CD8-positive, alpha-beta T cell (primary cell): ENCODE measurements at regions of chr4 and their contacts with region 1.

Region 1: DNA sequence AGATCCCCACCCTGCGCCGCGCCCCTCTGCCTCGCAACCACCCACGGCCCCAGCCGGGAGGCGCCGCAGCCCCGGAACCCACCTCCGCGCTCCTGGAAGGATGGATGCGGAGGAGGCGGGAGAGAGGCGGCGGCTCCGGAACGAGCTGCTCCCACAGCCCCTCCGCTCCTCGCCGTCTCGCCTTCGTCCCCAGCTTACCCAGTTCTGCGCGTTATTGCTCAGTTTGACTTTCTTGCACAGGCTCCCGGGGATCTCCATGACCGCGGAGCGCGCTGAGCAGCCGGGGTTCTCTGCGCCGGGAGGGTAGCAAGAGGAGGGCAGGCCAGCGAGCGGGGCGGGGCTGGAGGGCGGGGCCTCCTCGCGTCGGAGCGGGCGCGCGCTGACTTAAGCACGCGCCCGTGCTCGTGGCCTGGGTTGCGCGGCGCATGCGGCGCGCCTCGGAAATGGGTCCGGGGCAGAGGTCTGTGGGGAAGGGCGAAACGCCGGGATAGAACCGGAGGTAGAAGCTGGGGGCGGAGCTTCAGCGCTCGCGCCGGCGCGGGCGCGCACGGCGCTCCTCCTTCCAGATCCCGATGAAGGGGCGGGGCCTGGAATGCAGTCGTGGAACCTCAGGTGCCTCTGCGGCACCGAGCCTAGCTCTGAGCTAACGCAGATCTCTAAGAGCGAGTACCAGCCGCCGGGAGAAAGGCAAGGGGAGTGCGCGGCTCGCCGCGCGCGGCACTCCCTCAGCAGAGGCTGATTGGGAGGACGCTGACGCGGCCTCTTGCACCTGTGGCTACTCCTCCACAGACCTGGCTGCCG is at the start of gene PAPSS1:
- DNase-seq: peak; percentile 87 to 99 (median 96)
- ATAC-seq: peak; percentile 85
- H3K4me3 ChIP-seq: peak within 1 kb of the TSS; percentile 65 to 92
- H3K4me3 Mint-ChIP-seq: peak within 1 kb of the TSS; percentile 91
- H3K27ac ChIP-seq: peak within 1 kb of the TSS; percentile 64 to 82
- H3K27ac Mint-ChIP-seq: peak within 1 kb of the TSS; percentile 93
- H3K4me1 ChIP-seq: peaks cover 13% of the 10 kb centered on the region
- H3K4me1 Mint-ChIP-seq: peaks cover 40% of the 10 kb centered on the region
- H3K27me3 ChIP-seq: no peaks in the 10 kb centered on the region
- H3K27me3 Mint-ChIP-seq: no peaks in the 10 kb centered on the region
- CTCF ChIP-seq: no peak
- total RNA-seq, gene PAPSS1: 5.2 to 5.3 TPM

Region 2: DNA sequence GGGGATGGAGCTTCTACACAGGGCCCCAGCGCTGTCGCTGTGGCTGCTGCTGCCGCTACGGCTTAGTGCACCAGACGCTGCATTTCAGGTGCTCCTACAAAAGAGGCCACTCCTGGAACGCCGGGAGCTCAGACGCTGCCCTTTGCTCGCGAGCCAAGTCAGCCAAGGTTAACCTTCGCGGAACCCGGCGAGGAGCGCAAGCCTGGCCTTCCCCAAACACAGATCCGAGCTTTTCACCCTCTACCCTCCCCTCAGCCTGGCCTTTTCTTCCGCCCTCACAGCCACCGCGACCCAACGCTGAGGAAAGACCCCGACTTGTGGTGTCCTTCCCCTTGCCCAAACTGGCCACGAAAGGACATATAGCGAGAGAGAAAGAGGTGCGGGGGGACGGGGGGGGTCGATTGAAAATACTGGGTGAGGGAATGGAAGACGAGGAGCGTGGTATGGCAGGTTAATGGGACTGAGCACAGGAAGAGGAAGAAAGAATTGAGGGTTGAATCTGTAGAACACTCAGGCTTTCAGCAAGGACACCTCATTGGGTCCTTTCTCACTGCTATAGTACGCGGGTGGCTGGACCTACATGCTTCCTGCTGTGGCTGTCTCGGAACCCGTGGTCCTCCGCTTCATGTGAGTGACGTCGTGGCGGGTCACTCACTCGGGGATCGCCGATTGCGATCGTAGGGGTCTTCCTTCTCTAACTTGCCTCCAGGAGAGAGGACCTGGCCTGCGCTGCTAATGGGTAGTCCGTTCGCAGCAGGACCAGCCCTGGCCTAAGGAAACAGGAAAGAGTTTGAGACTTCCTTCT is 1404.0 kb before region 1 on chr4 and contains the starts of genes AIMP1 and TBCK:
- CTCF ChIA-PET with region 1: no interaction called
- POLR2A ChIA-PET with region 1: no interaction called
- intact Hi-C with region 1: loop called (anchors 1 to 2 kb)
- DNase-seq: peak; percentile 81 to 95 (median 90)
- ATAC-seq: peak; percentile 85
- H3K4me3 ChIP-seq: peak within 1 kb of the TSS; percentile 72 to 85
- H3K4me3 Mint-ChIP-seq: no peak within 1 kb of the TSS
- H3K27ac ChIP-seq: peak within 1 kb of the TSS; percentile 89 to 96
- H3K27ac Mint-ChIP-seq: no peak within 1 kb of the TSS
- H3K4me1 ChIP-seq: peaks cover 19% of the 10 kb centered on the region
- H3K4me1 Mint-ChIP-seq: peaks cover 42% of the 10 kb centered on the region
- H3K27me3 ChIP-seq: no peaks in the 10 kb centered on the region
- H3K27me3 Mint-ChIP-seq: no peaks in the 10 kb centered on the region
- CTCF ChIP-seq: no peak
- total RNA-seq, gene AIMP1: 69.3 to 79.2 TPM
- total RNA-seq, gene TBCK: 17.4 to 20.4 TPM

Region 3: DNA sequence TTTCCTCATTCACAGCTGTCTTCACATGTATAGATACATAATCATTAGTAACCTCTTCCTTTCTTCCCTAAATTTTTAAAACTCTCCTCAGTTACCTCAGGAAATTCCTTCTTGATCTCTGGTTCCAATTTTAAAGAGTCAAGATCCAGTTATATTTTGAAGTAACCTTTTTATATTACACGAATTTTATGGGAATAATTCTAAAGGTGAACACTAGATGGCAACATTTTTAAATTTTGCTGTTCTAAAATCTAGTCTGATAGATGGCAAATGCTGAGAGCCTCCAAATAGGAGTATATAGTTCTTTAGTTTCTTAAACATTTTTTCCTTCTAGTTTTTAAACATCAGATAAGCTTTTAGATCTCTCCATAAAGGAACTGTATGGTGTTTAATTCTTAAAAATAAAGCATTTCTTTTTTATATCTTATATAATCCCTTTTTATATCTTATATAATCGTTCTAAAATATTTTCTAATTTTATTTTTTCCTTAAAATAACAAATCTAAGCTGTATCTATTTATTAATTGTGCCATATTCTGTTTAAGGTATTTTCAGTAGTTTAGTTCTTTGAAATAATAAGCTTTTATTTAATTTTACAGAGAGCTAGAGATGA is 37.8 kb after region 1 on chr4:
- CTCF ChIA-PET with region 1: no interaction called
- POLR2A ChIA-PET with region 1: no interaction called
- intact Hi-C with region 1: loop called in 1 of 2 experiments (anchors 1 kb)
- DNase-seq: peak in 2 of 9 experiments; percentile 15 to 40
- ATAC-seq: no peak
- H3K4me3 ChIP-seq: no peak overlapping the region
- H3K4me3 Mint-ChIP-seq: no peak overlapping the region
- H3K27ac ChIP-seq: no peak overlapping the region
- H3K27ac Mint-ChIP-seq: no peak overlapping the region
- H3K4me1 ChIP-seq: no peaks in the 10 kb centered on the region
- H3K4me1 Mint-ChIP-seq: no peaks in the 10 kb centered on the region
- H3K27me3 ChIP-seq: no peaks in the 10 kb centered on the region
- H3K27me3 Mint-ChIP-seq: peaks cover 10% of the 10 kb centered on the region
- CTCF ChIP-seq: peak; percentile 76

Region 4: GRCh38 chr4:107989537-107990386 is 269.6 kb after region 1 on chr4 and contains the start of gene HADH:
- CTCF ChIA-PET with region 1: no interaction called
- POLR2A ChIA-PET with region 1: no interaction called
- intact Hi-C with region 1: loop called (anchors 1 kb)
- DNase-seq: peak; percentile 87 to 97 (median 94)
- ATAC-seq: peak; percentile 99
- H3K4me3 ChIP-seq: peak within 1 kb of the TSS; percentile 65 to 75
- H3K4me3 Mint-ChIP-seq: peak within 1 kb of the TSS; percentile 96
- H3K27ac ChIP-seq: peak within 1 kb of the TSS; percentile 70 to 74
- H3K27ac Mint-ChIP-seq: peak within 1 kb of the TSS; percentile 95
- H3K4me1 ChIP-seq: peaks cover 28% of the 10 kb centered on the region
- H3K4me1 Mint-ChIP-seq: peaks cover 60% of the 10 kb centered on the region
- H3K27me3 ChIP-seq: no peaks in the 10 kb centered on the region
- H3K27me3 Mint-ChIP-seq: no peaks in the 10 kb centered on the region
- CTCF ChIP-seq: no peak
- total RNA-seq, gene HADH: 9.6 to 10.9 TPM

Region 5: DNA sequence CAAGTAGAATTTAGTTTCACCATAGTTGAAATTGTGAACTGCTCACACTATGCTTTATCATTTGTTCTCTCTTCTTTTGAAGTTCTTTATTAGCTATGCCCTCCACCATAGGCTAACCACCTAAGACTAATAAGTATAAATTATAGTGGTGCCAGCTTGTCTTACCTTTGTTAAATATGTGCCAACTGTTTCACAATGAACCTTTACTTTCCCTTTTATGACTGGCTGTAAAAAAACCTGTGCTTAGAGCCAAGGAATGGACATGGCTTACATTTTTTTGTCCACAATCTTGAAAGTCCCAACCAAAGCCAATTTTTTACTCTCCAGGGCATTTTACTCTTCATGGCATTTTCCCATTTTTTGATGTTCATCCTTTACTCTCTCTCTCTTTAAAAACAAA is 572.1 kb after region 1 on chr4:
- CTCF ChIA-PET with region 1: no interaction called
- POLR2A ChIA-PET with region 1: no interaction called
- intact Hi-C with region 1: no loop called
- DNase-seq: no peak
- ATAC-seq: no peak
- H3K4me3 ChIP-seq: no peak overlapping the region
- H3K4me3 Mint-ChIP-seq: no peak overlapping the region
- H3K27ac ChIP-seq: no peak overlapping the region
- H3K27ac Mint-ChIP-seq: no peak overlapping the region
- H3K4me1 ChIP-seq: peaks cover 5% of the 10 kb centered on the region
- H3K4me1 Mint-ChIP-seq: peaks cover 9% of the 10 kb centered on the region
- H3K27me3 ChIP-seq: no peaks in the 10 kb centered on the region
- H3K27me3 Mint-ChIP-seq: no peaks in the 10 kb centered on the region
- CTCF ChIP-seq: no peak

Region 6: GRCh38 chr4:108650212-108651013 is 930.3 kb after region 1 on chr4 and contains the start of gene OSTC:
- CTCF ChIA-PET with region 1: no interaction called
- POLR2A ChIA-PET with region 1: interaction called, 5 read pairs
- intact Hi-C with region 1: loop called (anchors 1 to 2 kb)
- DNase-seq: peak; percentile 81 to 96 (median 93)
- ATAC-seq: peak; percentile 89
- H3K4me3 ChIP-seq: peak within 1 kb of the TSS; percentile 83 to 98
- H3K4me3 Mint-ChIP-seq: peak within 1 kb of the TSS; percentile 93
- H3K27ac ChIP-seq: peak within 1 kb of the TSS; percentile 93 to 94
- H3K27ac Mint-ChIP-seq: peak within 1 kb of the TSS; percentile 98
- H3K4me1 ChIP-seq: peaks cover 23% of the 10 kb centered on the region
- H3K4me1 Mint-ChIP-seq: peaks cover 40% of the 10 kb centered on the region
- H3K27me3 ChIP-seq: no peaks in the 10 kb centered on the region
- H3K27me3 Mint-ChIP-seq: no peaks in the 10 kb centered on the region
- CTCF ChIP-seq: no peak
- total RNA-seq, gene OSTC: 25.6 to 28.1 TPM